ENCODE measurements at regions of chr17 and their contacts with region 1.

Region 1: DNA sequence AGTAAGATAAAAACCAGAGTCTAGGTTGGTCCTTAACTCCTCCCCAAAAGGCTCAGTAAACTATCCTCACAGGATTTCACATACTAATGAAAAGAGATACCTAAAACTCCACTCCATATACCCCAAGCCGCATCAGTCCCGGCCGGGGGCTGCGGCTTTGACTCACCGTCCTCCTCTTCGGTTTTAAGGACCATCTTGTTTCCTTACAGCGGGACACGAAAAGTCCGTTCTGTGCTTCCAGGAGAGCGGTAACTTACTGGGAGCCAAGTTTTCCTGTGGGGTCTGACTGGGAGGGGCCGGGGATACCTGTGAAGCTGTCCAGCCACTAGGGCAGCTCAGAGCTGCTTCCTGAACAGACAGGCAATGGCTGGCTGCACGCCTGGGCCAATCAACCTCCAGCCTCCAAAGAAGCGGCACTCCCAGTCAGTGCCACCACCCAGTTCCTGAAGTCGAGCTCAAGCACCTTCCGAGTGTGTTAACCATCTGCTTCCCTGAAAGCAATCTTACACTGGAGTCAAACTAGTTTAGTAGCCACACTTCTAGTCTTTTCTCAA is 45.5 kb downstream of the CYTH1 start:
- DNase-seq: peak; percentile 71
- ATAC-seq: peak; percentile 86
- H3K4me3 Mint-ChIP-seq: peak overlapping the region; percentile 83
- H3K27ac Mint-ChIP-seq: peak overlapping the region; percentile 91
- H3K4me1 Mint-ChIP-seq: peaks cover 87% of the 10 kb centered on the region
- H3K27me3 Mint-ChIP-seq: no peaks in the 10 kb centered on the region

Region 2: GRCh38 chr17:78645421-78646295 is 90.9 kb before region 1 on chr17:
- CTCF ChIA-PET with region 1: no interaction called
- POLR2A ChIA-PET with region 1: no interaction called
- DNase-seq: peak; percentile 72
- ATAC-seq: peak; percentile 78
- H3K4me3 Mint-ChIP-seq: peak overlapping the region; percentile 42
- H3K27ac Mint-ChIP-seq: peak overlapping the region; percentile 71
- H3K4me1 Mint-ChIP-seq: peaks cover 11% of the 10 kb centered on the region
- H3K27me3 Mint-ChIP-seq: peaks cover 3% of the 10 kb centered on the region

Region 3: GRCh38 chr17:78665952-78666920 is 70.4 kb before region 1 on chr17:
- CTCF ChIA-PET with region 1: no interaction called
- POLR2A ChIA-PET with region 1: no interaction called
- DNase-seq: peak; percentile 72
- ATAC-seq: peak; percentile 73
- H3K4me3 Mint-ChIP-seq: peak overlapping the region; percentile 48
- H3K27ac Mint-ChIP-seq: peak overlapping the region; percentile 76
- H3K4me1 Mint-ChIP-seq: peaks cover 35% of the 10 kb centered on the region
- H3K27me3 Mint-ChIP-seq: peaks cover 2% of the 10 kb centered on the region

Region 4: DNA sequence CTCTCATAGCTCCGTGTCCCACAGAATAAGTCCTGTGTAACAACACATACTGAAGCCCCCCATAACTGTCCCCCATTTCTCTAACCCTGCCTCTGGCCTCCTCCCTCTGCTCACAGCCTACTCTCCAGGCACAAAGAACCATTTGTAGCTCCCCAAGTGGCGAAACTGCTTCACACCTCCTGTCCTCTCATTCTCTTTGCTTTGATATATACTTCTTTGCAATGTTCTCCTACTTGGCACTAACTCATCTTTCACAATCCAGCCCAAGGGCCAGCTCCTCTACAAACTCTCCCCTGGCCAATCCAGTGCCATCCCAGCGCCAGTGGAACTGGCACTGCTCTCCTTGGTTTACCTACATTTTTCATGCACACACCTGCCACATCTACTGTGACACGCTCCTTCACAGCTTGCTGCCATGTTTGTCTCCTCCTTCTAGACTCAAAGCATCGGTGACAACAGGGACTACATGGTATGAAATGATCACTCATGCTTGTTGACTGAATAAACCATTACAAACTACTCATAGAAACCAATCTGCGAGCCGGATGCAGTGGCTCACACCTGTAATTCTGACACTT is 32.7 kb after region 1 on chr17:
- CTCF ChIA-PET with region 1: interaction called, 10 read pairs
- POLR2A ChIA-PET with region 1: interaction called, 5 read pairs
- DNase-seq: no peak
- ATAC-seq: peak; percentile 21
- H3K4me3 Mint-ChIP-seq: no peak overlapping the region
- H3K27ac Mint-ChIP-seq: no peak overlapping the region
- H3K4me1 Mint-ChIP-seq: peaks cover 39% of the 10 kb centered on the region
- H3K27me3 Mint-ChIP-seq: no peaks in the 10 kb centered on the region

Region 5: GRCh38 chr17:78915872-78916632 is 179.4 kb after region 1 on chr17:
- CTCF ChIA-PET with region 1: no interaction called
- POLR2A ChIA-PET with region 1: no interaction called
- DNase-seq: no peak
- ATAC-seq: peak; percentile 45
- H3K4me3 Mint-ChIP-seq: peak overlapping the region; percentile 10
- H3K27ac Mint-ChIP-seq: peak overlapping the region; percentile 79
- H3K4me1 Mint-ChIP-seq: peaks cover 10% of the 10 kb centered on the region
- H3K27me3 Mint-ChIP-seq: no peaks in the 10 kb centered on the region

Measured in activated CD8-positive, alpha-beta T cell treated with anti-CD3 and anti-CD28 coated beads, Interleukin-2, amount 10 ng/mL, durations not matched to agents 7 days and 5 days (primary cell).